ENCODE measurements at regions of chr1 and their contacts with region 1.

Region 1: DNA sequence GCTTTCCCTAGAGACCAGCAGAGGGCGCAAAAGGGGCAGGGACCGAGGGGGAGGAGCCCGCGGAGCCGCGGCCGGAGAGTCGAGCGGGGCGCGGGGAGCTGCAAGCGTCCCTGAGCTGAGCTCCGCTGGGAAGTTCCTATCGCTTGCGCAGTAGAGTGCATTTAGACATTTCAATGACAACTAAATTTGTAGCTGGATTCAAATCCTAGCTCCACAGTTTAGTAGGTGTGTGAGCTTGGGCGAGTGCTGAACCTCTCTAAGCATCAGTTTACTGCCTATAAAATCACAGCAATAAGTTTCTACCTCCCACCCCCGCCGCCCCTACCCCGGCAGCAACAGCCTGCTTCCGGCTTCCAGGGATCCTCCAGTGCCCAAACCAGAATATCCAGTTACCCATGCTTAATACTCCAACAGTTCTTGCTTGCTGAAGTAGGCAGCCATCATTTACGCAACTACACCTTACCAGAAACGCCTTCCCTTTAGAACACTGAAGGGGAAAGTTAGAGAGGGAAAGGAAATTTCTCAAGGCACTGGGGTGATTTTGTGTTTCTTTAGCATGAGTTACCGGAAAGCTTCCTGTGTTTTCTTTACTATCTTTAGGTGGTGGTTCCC is 9.1 kb downstream of the TLR5 start:
- DNase-seq: peak; percentile 86
- H3K4me3 Mint-ChIP-seq: peak overlapping the region; percentile 56
- H3K27ac Mint-ChIP-seq: no peak overlapping the region
- H3K4me1 Mint-ChIP-seq: peaks cover 13% of the 10 kb centered on the region
- H3K27me3 Mint-ChIP-seq: peaks cover 3% of the 10 kb centered on the region

Region 2: DNA sequence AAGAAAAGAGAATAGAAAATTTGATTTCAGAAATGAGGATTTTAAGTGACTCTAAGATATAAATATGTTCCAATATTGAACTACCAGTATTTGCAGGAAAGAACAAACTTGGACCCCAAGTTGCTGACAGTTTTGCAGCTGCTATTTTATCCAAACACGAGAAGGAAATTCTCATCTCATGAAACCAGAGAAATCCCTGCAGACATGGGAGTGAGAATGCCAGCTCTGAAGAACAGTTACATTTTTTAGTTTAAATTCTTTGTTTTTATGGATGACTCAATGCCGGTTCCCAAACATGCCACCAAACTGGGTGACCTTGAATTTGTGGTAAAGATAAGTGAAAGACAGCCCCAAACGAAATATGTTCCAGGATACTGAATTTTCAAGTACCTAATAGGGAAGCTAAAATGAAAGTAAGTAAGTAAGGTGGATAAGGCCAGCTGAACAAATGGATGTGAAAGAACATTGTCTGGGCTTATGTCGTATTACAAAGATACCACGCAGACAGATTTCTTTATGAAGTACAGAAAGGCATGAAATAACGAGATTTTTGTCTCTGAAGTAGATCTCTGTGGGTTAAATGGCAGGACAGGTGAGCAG is 10.8 kb before region 1 on chr1:
- CTCF ChIA-PET with region 1: interaction called, 58 read pairs
- intact Hi-C with region 1: no loop called
- DNase-seq: no peak
- H3K4me3 Mint-ChIP-seq: peak overlapping the region; percentile 14
- H3K27ac Mint-ChIP-seq: no peak overlapping the region
- H3K4me1 Mint-ChIP-seq: peaks cover 8% of the 10 kb centered on the region
- H3K27me3 Mint-ChIP-seq: no peaks in the 10 kb centered on the region

Region 3: DNA sequence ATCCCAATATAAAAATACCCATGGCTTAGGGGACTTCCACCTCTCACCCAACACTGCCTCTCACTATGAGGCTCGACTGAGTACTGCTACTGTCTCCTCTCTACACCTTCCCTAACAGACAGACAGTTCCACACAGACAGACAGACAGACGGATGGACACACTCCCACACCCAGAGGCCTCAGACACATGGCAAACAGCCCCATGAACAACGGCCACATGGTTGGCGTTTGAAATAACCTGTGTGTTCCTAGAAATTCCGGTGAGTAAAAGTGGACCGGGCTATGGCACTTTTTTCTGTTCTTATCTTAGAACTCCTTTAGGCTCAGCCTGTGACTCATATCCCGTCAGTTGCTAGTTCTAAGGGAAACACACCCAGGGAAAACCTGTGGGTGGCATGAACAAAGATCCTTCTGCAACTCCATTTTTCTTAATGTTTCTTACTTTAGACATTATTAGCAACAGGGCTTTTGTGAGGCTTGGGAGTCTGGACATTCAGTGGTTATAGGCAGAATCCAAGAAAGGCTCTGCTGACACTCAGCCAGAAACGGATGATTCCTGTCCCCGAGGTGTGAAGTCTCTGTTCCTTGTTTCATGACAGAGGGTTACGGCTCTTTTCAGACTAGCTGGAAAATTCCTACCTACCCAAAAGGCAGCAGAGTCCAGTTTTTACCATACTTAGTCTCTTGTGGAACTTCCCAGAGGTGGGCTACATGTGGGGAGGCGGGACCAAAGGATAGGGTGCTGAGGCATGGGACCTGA is 99.7 kb after region 1 on chr1:
- CTCF ChIA-PET with region 1: interaction called, 28 read pairs
- intact Hi-C with region 1: no loop called
- DNase-seq: peak; percentile 39
- H3K4me3 Mint-ChIP-seq: no peak overlapping the region
- H3K27ac Mint-ChIP-seq: peak overlapping the region; percentile 2
- H3K4me1 Mint-ChIP-seq: peaks cover 63% of the 10 kb centered on the region
- H3K27me3 Mint-ChIP-seq: no peaks in the 10 kb centered on the region

Region 4: GRCh38 chr1:223249854-223250631 is 116.1 kb after region 1 on chr1:
- CTCF ChIA-PET with region 1: interaction called, 31 read pairs
- intact Hi-C with region 1: no loop called
- DNase-seq: no peak
- H3K4me3 Mint-ChIP-seq: no peak overlapping the region
- H3K27ac Mint-ChIP-seq: no peak overlapping the region
- H3K4me1 Mint-ChIP-seq: peaks cover 27% of the 10 kb centered on the region
- H3K27me3 Mint-ChIP-seq: no peaks in the 10 kb centered on the region

Region 5: GRCh38 chr1:223363856-223364684 is 230.1 kb after region 1 on chr1 and contains the start of gene SUSD4:
- CTCF ChIA-PET with region 1: interaction called, 26 read pairs
- intact Hi-C with region 1: loop called (anchors 1 kb)
- DNase-seq: peak; percentile 77
- H3K4me3 Mint-ChIP-seq: peak within 1 kb of the TSS; percentile 89
- H3K27ac Mint-ChIP-seq: no peak within 1 kb of the TSS
- H3K4me1 Mint-ChIP-seq: peaks cover 18% of the 10 kb centered on the region
- H3K27me3 Mint-ChIP-seq: peaks cover 10% of the 10 kb centered on the region
- total RNA-seq, gene SUSD4: 1.1 to 1.8 TPM

Region 6: DNA sequence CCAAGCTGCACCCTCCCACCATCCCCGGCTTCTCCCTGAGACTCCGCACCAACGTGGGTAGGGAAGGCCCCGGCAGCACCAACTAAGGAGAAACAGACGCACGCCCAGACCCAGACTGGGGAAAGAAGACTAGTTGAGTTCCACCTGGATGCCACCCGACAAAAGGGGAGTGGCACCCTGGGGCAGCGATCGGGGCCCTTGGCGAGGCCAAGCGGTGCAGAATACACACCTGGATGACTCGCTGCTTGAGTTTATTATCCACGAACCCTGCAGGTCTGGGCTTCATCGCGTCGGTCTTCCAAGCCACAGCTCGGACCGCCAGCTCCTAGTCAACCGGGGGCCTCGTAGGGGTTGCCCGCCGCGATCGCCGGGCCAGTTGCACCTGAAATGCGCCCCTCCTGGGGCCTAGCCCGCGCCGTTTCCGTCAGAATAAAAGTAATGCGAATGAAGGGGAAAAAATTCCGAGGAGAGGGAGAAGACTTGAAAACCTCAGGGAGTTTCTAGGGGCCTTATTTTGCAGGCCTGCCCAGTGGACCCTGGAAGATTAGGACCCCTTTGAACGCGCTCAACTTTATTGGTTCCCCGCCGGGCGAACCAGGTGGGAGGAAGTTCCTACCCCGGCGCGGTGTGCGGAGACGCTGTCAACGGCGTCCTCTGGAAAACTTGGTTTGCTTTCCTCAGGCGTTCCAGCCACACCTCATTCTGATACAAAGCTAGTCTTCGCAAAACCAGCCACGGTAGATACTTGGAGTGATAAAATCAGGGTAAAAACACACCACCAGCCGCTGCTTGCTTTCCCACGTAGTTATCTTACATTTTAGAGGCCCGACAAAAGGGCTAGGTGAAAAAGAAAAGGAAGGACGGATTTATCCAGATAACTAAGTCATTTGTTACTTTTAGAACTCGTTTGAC is 1196.2 kb after region 1 on chr1 and contains the start of gene NVL:
- CTCF ChIA-PET with region 1: no interaction called
- intact Hi-C with region 1: loop called (anchors 10 kb)
- DNase-seq: peak; percentile 89
- H3K4me3 Mint-ChIP-seq: peak within 1 kb of the TSS; percentile 98
- H3K27ac Mint-ChIP-seq: peak within 1 kb of the TSS; percentile 98
- H3K4me1 Mint-ChIP-seq: peaks cover 38% of the 10 kb centered on the region
- H3K27me3 Mint-ChIP-seq: no peaks in the 10 kb centered on the region
- total RNA-seq, gene NVL: 26.7 to 29.9 TPM